ENCODE measurements at regions of chr9 and their contacts with region 1.

Region 1: GRCh38 chr9:17810728-17811571 is 232.1 kb downstream of the SH3GL2 start:
- DNase-seq: peak; percentile 70
- H3K4me3 ChIP-seq: no peak overlapping the region
- H3K27ac ChIP-seq: no peak overlapping the region
- H3K4me1 ChIP-seq: peaks cover 0 to 4% (median 0%) of the 10 kb centered on the region in 4 donors
- H3K27me3 ChIP-seq: peaks cover 0 to 9% (median 0%) of the 10 kb centered on the region in 3 donors
- CTCF ChIP-seq: peak; percentile 58 to 86 (median 78)
- EP300 ChIP-seq: no peak
- POLR2A ChIP-seq: no peak

Region 2: GRCh38 chr9:17750269-17750668 is 60.7 kb before region 1 on chr9:
- intact Hi-C with region 1: no loop called
- DNase-seq: no peak
- H3K4me3 ChIP-seq: no peak overlapping the region
- H3K27ac ChIP-seq: no peak overlapping the region
- H3K4me1 ChIP-seq: no peaks in the 10 kb centered on the region
- H3K27me3 ChIP-seq: no peaks in the 10 kb centered on the region
- CTCF ChIP-seq: no peak
- EP300 ChIP-seq: no peak
- POLR2A ChIP-seq: no peak

Region 3: DNA sequence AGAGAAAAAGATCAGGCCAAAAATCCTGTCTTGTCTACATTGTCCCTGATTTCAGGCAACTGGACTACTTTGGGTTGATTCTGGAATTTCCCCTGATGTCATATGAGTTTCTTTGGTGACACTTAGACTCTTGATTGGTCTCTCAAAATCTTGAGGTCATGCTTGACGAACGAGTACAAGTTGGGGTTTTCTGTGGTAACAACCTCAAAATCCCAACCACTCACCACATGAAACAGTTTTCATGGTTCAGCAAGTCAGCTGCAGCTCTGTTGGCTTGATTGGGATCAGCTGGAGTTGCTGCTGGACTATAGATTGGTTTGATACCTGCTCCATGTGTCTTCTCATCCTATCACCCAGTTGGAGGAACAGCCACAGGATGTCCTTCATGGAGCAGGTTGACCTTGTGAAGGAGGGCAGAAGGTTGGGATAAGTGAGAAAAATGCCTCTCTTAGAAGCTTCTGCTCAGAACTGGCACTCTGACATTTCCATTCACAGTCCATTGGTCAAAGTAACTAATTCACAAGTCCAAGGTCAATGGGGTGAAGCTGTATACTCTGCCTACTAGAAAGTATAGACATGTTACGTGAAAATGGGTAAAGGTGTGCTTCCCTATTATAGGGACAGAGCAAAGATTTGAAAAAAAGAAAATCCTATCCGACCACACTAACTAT is 52.4 kb after region 1 on chr9:
- intact Hi-C with region 1: no loop called
- DNase-seq: no peak
- H3K4me3 ChIP-seq: no peak overlapping the region
- H3K27ac ChIP-seq: no peak overlapping the region
- H3K4me1 ChIP-seq: no peaks in the 10 kb centered on the region
- H3K27me3 ChIP-seq: no peaks in the 10 kb centered on the region
- CTCF ChIP-seq: no peak
- EP300 ChIP-seq: no peak
- POLR2A ChIP-seq: no peak

Region 4: DNA sequence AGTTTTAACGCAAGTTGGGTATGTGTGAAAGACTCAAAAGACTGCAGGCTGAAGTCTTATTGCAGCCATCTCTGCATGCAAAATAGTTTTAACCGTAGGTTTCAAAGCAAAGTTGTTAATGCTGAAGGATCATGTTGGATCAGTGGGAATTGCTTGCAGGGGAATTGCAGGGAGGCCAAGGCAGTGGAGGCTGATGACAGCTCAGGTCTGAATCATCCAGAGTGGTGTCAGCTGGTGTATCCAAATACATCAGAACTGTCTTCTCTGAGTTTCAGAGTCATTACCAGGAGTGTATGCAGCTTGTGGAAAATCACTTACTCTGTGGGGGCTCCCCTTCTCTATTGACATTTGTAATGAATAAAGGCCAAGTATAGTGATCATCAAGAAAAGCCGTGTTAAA is 203.6 kb after region 1 on chr9:
- intact Hi-C with region 1: loop called (anchors 10 kb)
- DNase-seq: no peak
- H3K4me3 ChIP-seq: no peak overlapping the region
- H3K27ac ChIP-seq: no peak overlapping the region
- H3K4me1 ChIP-seq: no peaks in the 10 kb centered on the region
- H3K27me3 ChIP-seq: no peaks in the 10 kb centered on the region
- CTCF ChIP-seq: no peak
- EP300 ChIP-seq: no peak
- POLR2A ChIP-seq: no peak

Region 5: DNA sequence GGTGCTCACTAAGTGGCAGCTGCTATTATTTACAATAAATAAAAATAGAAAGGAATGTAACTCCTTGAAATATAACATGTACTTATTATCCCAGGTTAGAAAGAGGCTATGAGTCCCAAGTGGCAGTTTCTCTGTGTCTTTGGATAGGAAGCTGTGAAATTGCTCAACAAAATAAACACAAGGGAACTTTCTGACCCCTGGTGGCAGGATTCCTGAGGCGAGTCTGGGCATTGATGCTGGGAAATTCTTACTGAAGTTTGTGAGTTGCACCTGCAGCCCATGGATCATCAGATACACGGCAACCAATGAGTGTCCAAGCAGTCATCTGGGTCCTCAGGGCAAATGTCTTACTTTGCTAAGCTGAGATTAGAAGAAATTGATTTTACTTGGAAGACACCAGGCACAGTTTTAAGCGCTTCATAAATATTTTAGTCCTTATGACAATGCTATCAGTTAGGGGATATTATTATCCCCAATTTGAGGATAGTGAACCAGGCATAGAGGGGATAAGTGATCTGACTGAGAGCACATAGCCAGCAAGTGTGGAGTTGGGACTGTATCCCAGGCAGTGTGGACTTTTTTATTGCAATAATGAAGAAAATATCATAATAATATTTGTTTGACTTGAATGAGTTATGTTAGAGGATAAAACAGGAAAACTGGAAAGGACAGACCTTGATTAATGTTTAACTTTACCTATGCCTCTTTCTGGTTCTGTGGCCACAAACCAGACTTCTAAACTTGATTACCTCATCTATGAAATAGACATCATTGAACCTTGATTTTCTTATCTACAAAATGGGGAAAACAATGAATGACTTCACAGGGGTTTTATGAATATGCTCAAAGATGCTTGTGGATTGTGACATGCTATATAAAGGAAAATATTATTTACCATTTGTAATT is 397.5 kb after region 1 on chr9:
- intact Hi-C with region 1: loop called (anchors 1 kb)
- DNase-seq: no peak
- H3K4me3 ChIP-seq: no peak overlapping the region
- H3K27ac ChIP-seq: peak overlapping the region in 1 of 4 donors; percentile 14
- H3K4me1 ChIP-seq: no peaks in the 10 kb centered on the region
- H3K27me3 ChIP-seq: no peaks in the 10 kb centered on the region
- CTCF ChIP-seq: peak in 3 of 4 experiments; percentile 36 to 61 (median 50)
- EP300 ChIP-seq: no peak
- POLR2A ChIP-seq: no peak

Measured in sigmoid colon (tissue), 7 donors.